ENCODE measurements at regions of chr5 and their contacts with region 1.

Region 1: GRCh38 chr5:96868603-96869371 is 7.5 kb upstream of the ERAP2 start:
- DNase-seq: peak; percentile 82
- ATAC-seq: peak; percentile 99
- H3K4me3 ChIP-seq: no peak overlapping the region
- H3K27ac ChIP-seq: no peak overlapping the region
- H3K4me1 ChIP-seq: no peaks in the 10 kb centered on the region
- H3K27me3 ChIP-seq: no peaks in the 10 kb centered on the region
- CTCF ChIP-seq: peak; percentile 97
- POLR2A ChIP-seq: no peak
- RAD21 ChIP-seq: peak; percentile 95

Region 2: GRCh38 chr5:96781031-96781937 is 87.5 kb before region 1 on chr5:
- CTCF ChIA-PET with region 1: no interaction called
- POLR2A ChIA-PET with region 1: no interaction called
- dilution Hi-C with region 1: no loop called
- in situ Hi-C with region 1: no loop called
- intact Hi-C with region 1: no loop called
- DNase-seq: peak; percentile 49
- ATAC-seq: peak; percentile 43
- H3K4me3 ChIP-seq: no peak overlapping the region
- H3K27ac ChIP-seq: no peak overlapping the region
- H3K4me1 ChIP-seq: peaks cover 8% of the 10 kb centered on the region
- H3K27me3 ChIP-seq: no peaks in the 10 kb centered on the region
- CTCF ChIP-seq: no peak
- POLR2A ChIP-seq: no peak
- RAD21 ChIP-seq: no peak

Region 3: DNA sequence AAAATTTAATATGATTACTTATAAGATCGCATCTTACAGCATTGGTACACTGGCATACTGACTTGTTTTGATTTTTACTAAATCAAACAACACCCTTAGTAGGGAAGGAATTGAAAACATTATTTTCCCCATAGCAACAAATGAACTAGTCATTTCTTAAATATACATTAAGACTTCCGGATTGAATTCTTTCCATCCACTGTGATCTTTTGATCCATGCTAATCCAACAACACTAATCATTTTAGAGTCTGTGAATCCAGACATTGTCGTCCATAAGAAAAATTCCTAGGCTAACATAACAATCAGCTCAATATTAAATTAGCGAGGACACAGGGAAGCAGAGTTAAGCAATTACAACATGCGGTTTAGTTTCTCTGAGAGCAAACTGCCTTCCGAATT is 39.5 kb before region 1 on chr5:
- CTCF ChIA-PET with region 1: no interaction called
- POLR2A ChIA-PET with region 1: no interaction called
- dilution Hi-C with region 1: no loop called
- in situ Hi-C with region 1: no loop called
- intact Hi-C with region 1: no loop called
- DNase-seq: peak; percentile 19
- ATAC-seq: no peak
- H3K4me3 ChIP-seq: no peak overlapping the region
- H3K27ac ChIP-seq: no peak overlapping the region
- H3K4me1 ChIP-seq: no peaks in the 10 kb centered on the region
- H3K27me3 ChIP-seq: no peaks in the 10 kb centered on the region; the same call in 1 of the 2 replicates
- CTCF ChIP-seq: no peak
- POLR2A ChIP-seq: no peak
- RAD21 ChIP-seq: no peak

Region 4: GRCh38 chr5:96855031-96855872 is 13.5 kb before region 1 on chr5:
- CTCF ChIA-PET with region 1: interaction called, 13 read pairs
- POLR2A ChIA-PET with region 1: no interaction called
- dilution Hi-C with region 1: no loop called
- in situ Hi-C with region 1: no loop called
- intact Hi-C with region 1: no loop called
- DNase-seq: peak; percentile 84
- ATAC-seq: peak; percentile 56
- H3K4me3 ChIP-seq: no peak overlapping the region; the same call in 1 of the 2 replicates
- H3K27ac ChIP-seq: peak overlapping the region; percentile 67
- H3K4me1 ChIP-seq: peaks cover 6% of the 10 kb centered on the region; the same call in 1 of the 2 replicates
- H3K27me3 ChIP-seq: no peaks in the 10 kb centered on the region
- CTCF ChIP-seq: no peak
- POLR2A ChIP-seq: no peak
- RAD21 ChIP-seq: no peak

Region 5: DNA sequence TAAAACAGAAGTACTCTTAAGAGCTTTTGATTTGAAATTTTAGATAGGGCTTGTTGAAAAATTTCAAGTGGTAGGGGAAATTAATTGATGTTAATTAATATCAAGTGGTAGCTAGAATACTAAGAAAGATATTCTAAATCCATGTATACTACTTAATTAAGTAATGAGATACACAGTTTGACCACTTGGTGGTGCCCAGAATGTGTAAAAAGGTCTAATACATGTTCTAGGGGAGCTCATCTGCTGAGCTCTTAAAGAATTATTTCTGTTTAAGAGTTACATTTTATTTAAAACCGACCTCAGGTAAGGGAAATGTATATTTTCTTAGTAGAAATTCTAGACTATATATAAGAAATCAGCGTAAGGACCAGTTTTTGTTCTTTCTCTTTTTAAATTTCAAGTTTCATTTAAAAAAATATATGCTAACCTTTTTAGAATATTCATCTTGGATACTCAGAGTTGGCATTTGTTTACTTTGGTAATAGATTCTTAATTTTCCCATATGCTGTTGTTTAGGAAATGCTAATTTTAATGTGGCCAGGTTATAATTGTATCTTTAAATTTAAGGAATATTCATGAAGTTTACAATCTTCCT is 128.6 kb after region 1 on chr5:
- CTCF ChIA-PET with region 1: interaction called, 3 read pairs
- POLR2A ChIA-PET with region 1: no interaction called
- dilution Hi-C with region 1: no loop called
- in situ Hi-C with region 1: no loop called
- intact Hi-C with region 1: loop called (anchors 5 kb)
- DNase-seq: peak; percentile 63
- ATAC-seq: peak; percentile 82
- H3K4me3 ChIP-seq: no peak overlapping the region
- H3K27ac ChIP-seq: no peak overlapping the region
- H3K4me1 ChIP-seq: peaks cover 3% of the 10 kb centered on the region; the same call in 1 of the 2 replicates
- H3K27me3 ChIP-seq: no peaks in the 10 kb centered on the region
- CTCF ChIP-seq: peak; percentile 52
- POLR2A ChIP-seq: no peak
- RAD21 ChIP-seq: peak; percentile 48

Region 6: DNA sequence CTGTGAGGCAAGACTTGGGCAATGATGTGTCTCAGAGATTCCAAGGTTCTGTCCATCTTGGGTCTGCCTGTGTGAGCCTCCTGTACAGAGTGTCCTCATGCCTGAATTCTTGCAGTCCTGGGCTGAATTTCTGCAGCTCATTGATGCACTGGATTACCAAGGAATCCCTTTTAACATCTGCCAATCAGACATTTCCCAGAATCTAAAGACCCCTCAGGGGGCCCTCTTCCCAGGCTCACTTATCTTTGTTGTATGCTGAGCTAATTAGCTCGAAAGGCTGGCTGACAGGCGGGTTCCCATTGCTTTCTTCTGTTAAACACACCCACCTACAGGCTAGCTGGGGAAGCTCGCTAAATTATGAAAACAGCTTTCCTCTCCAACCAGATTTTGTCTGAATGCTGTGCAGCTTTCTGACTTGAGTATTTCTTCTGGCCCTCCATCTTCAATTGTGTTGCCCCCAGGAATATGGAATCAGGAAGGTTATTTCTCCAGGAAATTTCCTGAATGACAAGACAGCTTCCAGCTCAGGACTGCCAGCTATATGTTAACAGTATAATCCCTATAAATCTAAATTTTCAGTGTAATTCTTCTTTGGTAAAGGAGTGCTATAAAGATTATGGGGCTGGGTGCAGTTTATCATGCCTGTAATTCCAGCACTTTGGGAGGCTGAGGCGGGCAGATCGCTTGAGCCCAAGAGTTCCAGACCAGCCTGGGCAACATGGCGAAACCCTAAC is 273.9 kb after region 1 on chr5 and contains the start of gene LIX1:
- CTCF ChIA-PET with region 1: interaction called, 15 read pairs
- POLR2A ChIA-PET with region 1: no interaction called
- dilution Hi-C with region 1: no loop called
- in situ Hi-C with region 1: no loop called
- intact Hi-C with region 1: loop called (anchors 1 kb)
- DNase-seq: peak; percentile 36
- ATAC-seq: peak; percentile 94
- H3K4me3 ChIP-seq: no peak within 1 kb of the TSS
- H3K27ac ChIP-seq: no peak within 1 kb of the TSS
- H3K4me1 ChIP-seq: no peaks in the 10 kb centered on the region
- H3K27me3 ChIP-seq: peaks cover 23% of the 10 kb centered on the region
- CTCF ChIP-seq: peak; percentile 61
- POLR2A ChIP-seq: no peak
- RAD21 ChIP-seq: peak; percentile 68
- total RNA-seq, gene LIX1: not detected in 2 replicates